ENCODE measurements at regions of chr16 and their contacts with region 1.

Region 1: GRCh38 chr16:71610936-71611871 is 14.8 kb upstream of the MARVELD3 start:
- DNase-seq: peak; percentile 78
- H3K4me3 Mint-ChIP-seq: no peak overlapping the region
- H3K27ac Mint-ChIP-seq: no peak overlapping the region
- H3K4me1 Mint-ChIP-seq: peaks cover 12% of the 10 kb centered on the region
- H3K27me3 Mint-ChIP-seq: peaks cover 25% of the 10 kb centered on the region

Region 2: DNA sequence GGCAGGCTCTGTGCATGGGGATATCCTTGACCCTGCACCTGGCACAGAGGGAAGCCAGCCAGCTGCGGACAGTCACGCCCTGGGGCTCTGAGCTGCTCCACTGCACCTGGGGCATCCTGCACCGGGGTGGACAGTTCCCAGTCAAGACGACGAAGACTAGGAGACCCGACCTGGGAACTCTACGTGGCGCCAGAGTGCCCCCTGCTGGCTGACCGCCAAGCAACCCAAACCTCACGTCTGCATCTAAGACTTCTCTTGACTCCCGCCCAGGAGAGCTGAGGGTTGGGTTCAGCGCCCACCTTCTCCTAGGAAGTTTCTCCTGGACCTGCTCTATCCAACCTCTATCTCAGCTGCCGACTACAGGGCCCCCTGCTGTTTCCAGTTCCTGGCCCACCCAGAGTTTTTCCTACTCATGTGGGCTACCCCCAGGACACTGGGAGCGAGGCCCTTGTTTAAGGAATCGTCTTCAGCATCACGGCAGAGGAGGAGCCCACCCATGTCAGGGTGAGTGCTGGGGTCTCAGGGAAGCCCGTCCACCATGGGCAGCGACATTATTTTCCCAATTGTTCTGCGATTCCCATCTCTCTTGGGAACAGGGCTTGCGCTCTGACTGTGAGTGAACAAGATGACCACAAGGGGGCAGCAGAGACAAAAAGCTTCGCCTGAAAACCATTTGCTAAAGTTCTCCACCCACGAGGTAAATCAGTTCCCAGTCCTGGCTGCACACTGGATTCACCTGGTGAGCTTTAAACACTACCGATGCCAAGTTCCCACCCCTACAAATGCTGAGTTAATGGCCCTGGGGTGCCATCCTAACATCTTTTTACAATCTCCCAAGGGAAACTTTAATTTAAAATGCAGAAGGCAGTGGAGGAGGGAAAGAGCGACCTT is 198.7 kb before region 1 on chr16:
- CTCF ChIA-PET with region 1: interaction called, 18 read pairs
- POLR2A ChIA-PET with region 1: no interaction called
- DNase-seq: peak; percentile 61
- H3K4me3 Mint-ChIP-seq: no peak overlapping the region
- H3K27ac Mint-ChIP-seq: no peak overlapping the region
- H3K4me1 Mint-ChIP-seq: peaks cover 7% of the 10 kb centered on the region
- H3K27me3 Mint-ChIP-seq: peaks cover 33% of the 10 kb centered on the region

Region 3: DNA sequence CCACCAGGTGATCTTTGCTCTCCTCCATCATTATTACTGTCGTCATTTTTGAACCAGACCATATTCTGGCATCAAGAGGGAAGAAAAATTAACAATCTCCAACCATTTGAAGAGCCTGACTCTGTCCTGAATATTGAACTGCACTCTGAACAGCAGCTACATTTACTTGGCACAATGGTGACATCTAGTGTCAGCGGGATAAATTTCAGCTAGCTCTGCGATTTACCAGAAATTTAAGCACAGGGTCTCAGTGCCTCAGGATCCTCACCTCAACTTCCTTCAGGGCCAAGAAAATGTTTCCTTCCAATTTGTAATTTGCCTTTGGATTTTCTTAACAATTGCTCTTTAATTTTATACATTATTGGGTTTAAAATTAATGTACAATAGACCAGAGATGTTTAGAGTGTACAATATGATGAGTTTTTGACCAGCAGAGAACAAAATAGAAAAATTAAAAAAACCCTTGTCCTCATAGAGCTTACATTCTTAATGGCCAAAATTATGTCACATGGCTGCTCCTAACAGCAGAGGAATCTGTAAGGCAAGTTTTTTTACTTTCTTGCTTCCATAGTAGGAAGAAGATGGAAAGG is 111.3 kb before region 1 on chr16:
- CTCF ChIA-PET with region 1: interaction called, 20 read pairs
- POLR2A ChIA-PET with region 1: no interaction called
- DNase-seq: peak; percentile 51
- H3K4me3 Mint-ChIP-seq: no peak overlapping the region
- H3K27ac Mint-ChIP-seq: no peak overlapping the region
- H3K4me1 Mint-ChIP-seq: no peaks in the 10 kb centered on the region
- H3K27me3 Mint-ChIP-seq: peaks cover 3% of the 10 kb centered on the region

Region 4: DNA sequence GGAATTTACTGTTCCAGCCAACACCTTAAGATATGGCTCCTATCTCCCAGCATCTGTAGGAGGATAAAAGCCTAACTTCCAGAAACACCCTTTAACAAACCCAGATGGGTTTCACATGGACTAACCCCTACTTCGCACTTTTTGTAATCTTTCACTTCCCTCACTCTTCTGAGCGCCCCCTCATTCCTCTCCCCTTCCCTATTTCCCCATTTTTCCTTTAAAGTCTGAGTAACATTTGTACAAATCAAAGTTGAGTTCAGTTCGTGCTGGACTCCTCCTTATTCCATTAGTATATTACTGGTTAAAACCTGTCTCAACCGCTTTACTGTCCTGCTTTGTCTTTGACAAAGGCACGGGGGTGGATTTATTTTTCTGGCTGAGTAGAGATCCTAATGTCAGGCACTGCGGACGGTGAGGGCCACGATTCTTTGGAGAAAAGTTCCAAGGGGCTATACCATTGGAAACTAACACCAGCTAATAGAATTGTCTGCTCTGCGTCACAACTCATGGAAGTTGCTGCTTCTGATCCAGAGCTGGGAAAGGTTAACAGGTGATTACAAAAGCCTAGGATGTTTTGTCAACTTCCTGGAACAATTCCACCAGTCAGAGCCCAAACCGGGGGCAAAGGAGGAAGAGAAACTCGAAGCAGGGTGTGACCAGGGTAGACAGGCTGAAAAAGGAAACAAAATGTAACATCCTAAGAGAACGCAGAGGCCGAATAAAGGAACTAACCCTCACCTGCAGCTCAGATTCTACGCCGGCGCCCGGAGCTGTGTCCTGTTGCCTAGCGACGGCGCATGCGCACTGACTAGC is 46.8 kb before region 1 on chr16:
- CTCF ChIA-PET with region 1: interaction called, 83 read pairs
- POLR2A ChIA-PET with region 1: interaction called, 15 read pairs
- DNase-seq: no peak
- H3K4me3 Mint-ChIP-seq: peak overlapping the region; percentile 84
- H3K27ac Mint-ChIP-seq: peak overlapping the region; percentile 90
- H3K4me1 Mint-ChIP-seq: peaks cover 19% of the 10 kb centered on the region
- H3K27me3 Mint-ChIP-seq: peaks cover 6% of the 10 kb centered on the region

Region 5: DNA sequence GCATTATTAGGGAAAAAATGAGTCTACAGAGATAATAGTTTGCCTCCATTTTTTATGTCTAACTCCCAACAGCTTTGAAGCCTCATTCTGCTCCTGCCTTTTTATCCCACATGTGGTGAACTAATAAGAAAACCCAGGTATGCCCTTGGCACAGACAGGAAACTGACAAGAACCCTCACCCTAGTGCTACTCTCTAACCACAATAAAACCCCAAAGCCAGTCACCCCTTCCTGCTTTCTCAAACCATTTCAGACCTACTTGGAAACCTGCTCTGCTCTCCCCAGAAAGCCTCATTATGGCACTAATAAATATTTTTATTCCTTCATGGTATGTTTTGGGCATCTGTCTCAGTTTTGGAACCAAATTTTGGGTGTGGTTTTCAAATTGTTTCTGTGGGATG is 10.9 kb after region 1 on chr16:
- CTCF ChIA-PET with region 1: interaction called, 15 read pairs
- POLR2A ChIA-PET with region 1: interaction called, 3 read pairs
- DNase-seq: peak; percentile 57
- H3K4me3 Mint-ChIP-seq: peak overlapping the region; percentile 1
- H3K27ac Mint-ChIP-seq: peak overlapping the region; percentile 30
- H3K4me1 Mint-ChIP-seq: peaks cover 11% of the 10 kb centered on the region
- H3K27me3 Mint-ChIP-seq: peaks cover 23% of the 10 kb centered on the region

Region 6: GRCh38 chr16:71630805-71631204 is 19.6 kb after region 1 on chr16:
- CTCF ChIA-PET with region 1: interaction called, 11 read pairs
- POLR2A ChIA-PET with region 1: no interaction called
- DNase-seq: no peak
- H3K4me3 Mint-ChIP-seq: no peak overlapping the region
- H3K27ac Mint-ChIP-seq: no peak overlapping the region
- H3K4me1 Mint-ChIP-seq: peaks cover 10% of the 10 kb centered on the region
- H3K27me3 Mint-ChIP-seq: peaks cover 8% of the 10 kb centered on the region

Region 7: GRCh38 chr16:71645453-71645852 is 34.2 kb after region 1 on chr16:
- CTCF ChIA-PET with region 1: interaction called, 10 read pairs
- POLR2A ChIA-PET with region 1: no interaction called
- DNase-seq: no peak
- H3K4me3 Mint-ChIP-seq: no peak overlapping the region
- H3K27ac Mint-ChIP-seq: no peak overlapping the region
- H3K4me1 Mint-ChIP-seq: no peaks in the 10 kb centered on the region
- H3K27me3 Mint-ChIP-seq: no peaks in the 10 kb centered on the region

Region 8: DNA sequence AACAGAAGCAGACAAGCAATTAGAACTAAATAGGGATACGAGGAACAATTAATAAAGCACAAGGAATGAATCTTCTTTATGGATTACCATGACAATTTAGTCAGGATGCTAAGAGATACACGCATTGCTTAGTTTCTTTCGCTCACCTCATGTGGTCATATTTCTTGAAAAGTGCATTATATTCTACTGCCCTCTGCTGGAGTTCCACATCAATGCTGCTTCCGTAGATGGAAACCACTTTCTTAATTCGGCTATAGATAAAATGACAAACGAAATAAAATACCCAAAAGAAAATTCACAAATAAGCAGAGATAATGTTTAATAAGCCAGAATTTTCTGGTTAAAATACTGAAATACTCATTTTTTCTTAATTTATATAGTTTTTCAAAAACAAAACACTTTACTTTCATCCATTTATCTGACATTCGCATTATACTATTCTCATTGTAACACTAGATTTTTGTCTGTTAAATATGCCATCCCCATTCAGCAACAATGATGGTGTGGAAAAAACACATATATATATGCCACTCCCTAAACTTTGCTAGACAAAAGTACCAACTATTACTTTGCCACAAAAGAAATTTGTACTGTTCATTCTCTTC is 135.3 kb after region 1 on chr16:
- CTCF ChIA-PET with region 1: no interaction called
- POLR2A ChIA-PET with region 1: no interaction called
- DNase-seq: no peak
- H3K4me3 Mint-ChIP-seq: no peak overlapping the region
- H3K27ac Mint-ChIP-seq: peak overlapping the region; percentile 34
- H3K4me1 Mint-ChIP-seq: peaks cover 3% of the 10 kb centered on the region
- H3K27me3 Mint-ChIP-seq: no peaks in the 10 kb centered on the region

Measured in activated CD4-positive, alpha-beta memory T cell treated with anti-CD3 and anti-CD28 coated beads, Interleukin-2, amount 10 ng/mL, durations not matched to agents 7 days and 5 days (primary cell).